ENCODE measurements at regions of chr15 and their contacts with region 1.

Region 1: DNA sequence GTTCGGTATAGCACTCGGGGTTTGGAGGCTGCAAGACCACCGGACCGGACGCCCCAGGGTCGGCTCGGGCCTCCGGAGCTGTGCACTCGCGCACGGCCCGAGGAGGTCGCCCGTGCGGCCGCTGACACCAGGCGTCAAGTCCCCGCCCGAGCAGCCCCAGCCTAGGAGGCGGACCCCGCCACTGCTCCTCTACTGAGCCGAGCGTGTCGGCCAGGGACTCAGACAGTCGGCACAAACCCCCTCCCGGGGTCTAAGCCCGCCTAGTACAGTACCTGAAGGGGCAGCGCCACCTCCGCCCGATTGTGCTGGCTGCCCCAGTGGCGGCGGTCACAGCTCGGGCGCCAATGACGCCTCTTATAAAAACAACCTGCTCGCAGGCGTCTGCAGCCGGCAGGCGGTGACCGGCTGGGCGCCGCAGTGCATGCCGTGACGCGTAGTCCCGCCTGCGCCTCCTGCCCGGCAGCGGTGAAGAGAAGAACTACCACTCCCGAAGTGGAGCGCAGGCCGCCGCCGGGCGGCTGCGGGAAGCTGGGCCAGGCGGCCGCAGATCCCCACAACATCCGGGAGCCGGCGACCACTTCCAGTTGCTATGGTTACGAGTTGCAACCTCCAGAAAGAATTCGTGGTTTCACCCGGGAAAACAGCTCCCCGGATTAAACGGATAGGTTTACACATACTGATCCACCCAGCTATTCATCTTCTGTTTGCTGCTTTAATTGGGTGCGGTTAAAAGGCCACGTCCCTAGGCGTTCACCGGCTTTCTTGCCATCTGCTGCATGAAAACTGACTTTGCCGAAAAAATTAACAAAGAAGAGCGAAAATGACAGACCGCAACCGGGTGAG is at the starts of genes CCPG1 and PIERCE2:
- DNase-seq: peak; percentile 72
- ATAC-seq: peak; percentile 92
- H3K4me3 ChIP-seq: peak within 1 kb of the TSS; percentile 78
- H3K27ac ChIP-seq: peak within 1 kb of the TSS; percentile 55
- H3K4me1 ChIP-seq: peaks cover 22% of the 10 kb centered on the region
- H3K27me3 ChIP-seq: no peaks in the 10 kb centered on the region
- CTCF ChIP-seq: peak; percentile 58 to 73 (median 64)
- EP300 ChIP-seq: peak in 1 of 2 experiments; percentile 60; a peak in 1 of 4 replicates
- POLR2A ChIP-seq: peak; percentile 86
- RAD21 ChIP-seq: no peak
- polyA plus RNA-seq, gene CCPG1: 6.6 to 7.5 TPM
- polyA plus RNA-seq, gene PIERCE2: 0.93 to 1.3 TPM

Region 2: DNA sequence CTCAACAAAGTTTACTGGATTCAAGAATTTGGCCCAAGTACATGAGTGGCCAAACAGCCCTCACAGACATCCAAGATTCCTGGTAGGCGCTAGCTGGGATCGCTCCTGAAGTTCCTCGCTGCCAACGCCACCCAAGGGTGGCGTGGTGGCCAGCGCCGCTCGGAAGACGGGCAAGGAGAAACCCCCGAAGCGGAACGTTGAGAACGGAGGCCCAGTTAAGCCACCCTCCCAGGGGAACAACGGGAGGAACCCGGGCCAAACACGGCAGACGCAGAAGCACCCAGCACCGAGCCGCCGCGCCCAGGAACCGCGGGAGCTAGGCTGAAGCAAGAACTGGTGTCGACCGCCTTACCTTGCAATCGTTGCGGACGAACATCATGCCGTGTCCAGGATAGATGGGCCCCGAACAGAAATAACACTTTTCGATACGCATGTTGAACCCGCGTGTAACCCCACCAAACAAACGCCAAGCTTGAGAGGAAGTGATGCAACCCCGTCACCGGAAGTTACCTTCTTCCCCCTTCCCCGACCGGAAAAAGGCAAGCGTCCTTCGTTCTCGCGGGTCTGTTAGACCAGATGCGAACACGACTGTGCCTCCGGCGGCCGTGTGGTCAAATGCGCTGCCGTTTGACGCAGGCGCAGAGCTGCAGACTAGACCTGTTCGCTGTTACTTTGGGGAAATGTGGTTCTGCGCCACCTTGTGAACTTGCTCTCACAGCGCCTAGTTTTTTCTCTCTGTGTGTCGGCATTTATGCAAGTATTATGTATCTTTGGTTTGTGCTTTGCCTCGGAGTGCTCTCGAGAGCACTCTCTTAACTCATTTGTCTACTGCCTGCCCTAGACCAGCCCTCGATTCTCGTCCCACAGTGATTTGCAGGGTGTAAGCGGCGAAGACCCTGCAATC is 211.5 kb before region 1 on chr15 and contains the start of gene RSL24D1:
- CTCF ChIA-PET with region 1: no interaction called
- POLR2A ChIA-PET with region 1: no interaction called
- RAD21 ChIA-PET with region 1: interaction called, 5 read pairs
- SMC1A ChIA-PET with region 1: interaction called, 3 read pairs
- in situ Hi-C with region 1: no loop called
- intact Hi-C with region 1: loop called (anchors 10 kb)
- DNase-seq: peak; percentile 97
- ATAC-seq: peak; percentile 97
- H3K4me3 ChIP-seq: peak within 1 kb of the TSS; percentile 99
- H3K27ac ChIP-seq: peak within 1 kb of the TSS; percentile 93
- H3K4me1 ChIP-seq: peaks cover 2% of the 10 kb centered on the region; the same call in 1 of the 2 replicates
- H3K27me3 ChIP-seq: no peaks in the 10 kb centered on the region
- CTCF ChIP-seq: peak; percentile 33 to 64 (median 44); a peak in 4 of 6 replicates
- EP300 ChIP-seq: 0 out of 4 replicates have a peak, but pooled peaks of 1 of the 2 experiments have one; percentile 34
- POLR2A ChIP-seq: peak; percentile 86
- RAD21 ChIP-seq: 0 out of 2 replicates have a peak, but pooled peaks have one; percentile 26
- polyA plus RNA-seq, gene RSL24D1: 198 to 249 TPM

Region 3: DNA sequence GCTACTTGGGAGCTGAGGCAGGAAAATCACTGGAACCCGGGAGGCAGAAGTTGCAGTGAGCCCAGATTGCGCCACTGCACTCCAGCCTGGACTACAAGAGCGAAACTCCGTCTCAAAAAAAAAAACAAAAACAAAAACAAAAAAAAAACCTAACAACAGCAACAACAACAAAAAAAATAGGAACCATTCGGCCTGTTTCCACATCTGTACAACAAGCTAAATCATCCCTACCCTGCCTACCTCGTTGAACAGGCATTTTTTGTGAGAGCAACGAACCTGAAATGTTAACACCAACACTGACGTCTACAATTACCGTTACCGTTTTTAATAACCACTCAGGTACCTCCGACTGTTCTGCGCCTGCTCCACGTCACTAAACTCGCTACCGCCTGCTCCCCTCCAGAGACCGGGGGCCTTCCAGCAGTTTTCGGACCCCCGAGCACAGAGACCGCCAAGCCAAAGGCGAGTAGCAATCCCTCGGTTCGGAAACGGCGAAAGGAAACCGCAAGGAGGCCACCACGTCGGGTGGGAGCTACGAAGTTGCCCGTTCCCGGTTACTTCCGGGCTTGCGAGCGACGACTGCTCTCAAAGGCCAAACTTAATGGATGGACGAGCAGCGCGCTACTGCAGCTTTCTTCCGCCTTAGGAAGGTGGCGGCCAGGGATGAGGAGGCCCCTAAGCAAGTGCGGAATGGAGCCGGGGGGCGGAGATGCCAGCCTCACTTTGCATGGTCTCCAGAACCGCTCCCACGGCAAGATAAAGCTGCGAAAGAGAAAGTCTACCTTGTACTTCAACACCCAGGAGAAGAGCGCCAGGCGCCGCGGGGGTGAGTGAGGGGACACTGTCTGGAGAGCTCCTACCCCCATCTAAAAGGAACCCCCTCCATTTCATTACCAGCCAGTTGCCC is 89.3 kb before region 1 on chr15 and contains the starts of genes PIGB and PIGBOS1:
- CTCF ChIA-PET with region 1: interaction called, 9 read pairs
- POLR2A ChIA-PET with region 1: interaction called, 12 read pairs
- RAD21 ChIA-PET with region 1: interaction called, 24 read pairs
- SMC1A ChIA-PET with region 1: interaction called, 13 read pairs
- in situ Hi-C with region 1: no loop called
- intact Hi-C with region 1: loop called (anchors 2 kb)
- DNase-seq: peak; percentile 76
- ATAC-seq: peak; percentile 92
- H3K4me3 ChIP-seq: peak within 1 kb of the TSS; percentile 80
- H3K27ac ChIP-seq: peak within 1 kb of the TSS; percentile 100
- H3K4me1 ChIP-seq: no peaks in the 10 kb centered on the region
- H3K27me3 ChIP-seq: no peaks in the 10 kb centered on the region
- CTCF ChIP-seq: no peak
- EP300 ChIP-seq: no peak
- POLR2A ChIP-seq: peak; percentile 93
- RAD21 ChIP-seq: no peak
- polyA plus RNA-seq, gene PIGB: 22.7 to 44.6 TPM
- polyA plus RNA-seq, gene PIGBOS1: 19.9 to 24.7 TPM

Region 4: DNA sequence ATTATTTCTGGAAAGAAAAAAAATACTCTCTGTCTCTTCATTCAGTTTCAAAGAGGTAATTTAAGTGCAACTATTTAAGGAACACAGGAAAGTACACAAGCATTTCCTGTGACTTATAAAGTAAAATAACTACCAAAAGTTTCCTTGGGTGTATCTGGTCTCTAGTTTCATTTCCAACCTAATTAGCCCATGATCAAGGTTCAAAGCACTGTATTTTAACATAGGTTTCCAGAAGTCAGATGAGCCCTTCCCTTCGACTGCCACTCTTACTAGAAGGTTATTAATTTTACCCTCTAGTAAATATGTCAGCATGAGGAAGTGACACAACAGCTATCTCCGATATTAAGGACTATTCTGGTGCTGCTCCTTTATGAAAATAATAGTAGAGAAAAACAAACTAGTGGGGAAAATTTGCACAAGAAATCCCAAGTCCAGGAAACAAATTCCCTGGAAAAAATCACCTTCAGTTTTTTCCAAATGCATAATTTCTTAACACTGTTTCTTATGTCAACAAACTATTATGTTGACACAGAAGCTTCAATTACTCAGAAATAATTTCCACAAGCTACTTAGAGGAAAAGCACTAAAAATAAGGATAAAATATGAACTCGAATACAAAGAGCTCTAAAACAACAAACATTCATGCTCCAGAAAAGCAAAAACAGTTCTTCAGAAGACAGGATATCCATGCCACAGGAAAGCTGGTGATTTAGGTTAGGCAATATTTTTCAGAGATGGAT is 35.3 kb before region 1 on chr15:
- CTCF ChIA-PET with region 1: interaction called, 7 read pairs
- POLR2A ChIA-PET with region 1: no interaction called
- RAD21 ChIA-PET with region 1: no interaction called
- SMC1A ChIA-PET with region 1: interaction called, 20 read pairs
- in situ Hi-C with region 1: no loop called
- intact Hi-C with region 1: no loop called
- DNase-seq: peak; percentile 24
- ATAC-seq: peak; percentile 80
- H3K4me3 ChIP-seq: peak overlapping the region; percentile 10; the same call in 1 of the 2 replicates
- H3K27ac ChIP-seq: peak overlapping the region; percentile 50
- H3K4me1 ChIP-seq: peaks cover 7% of the 10 kb centered on the region
- H3K27me3 ChIP-seq: no peaks in the 10 kb centered on the region
- CTCF ChIP-seq: no peak
- EP300 ChIP-seq: no peak
- POLR2A ChIP-seq: no peak
- RAD21 ChIP-seq: no peak

Region 5: DNA sequence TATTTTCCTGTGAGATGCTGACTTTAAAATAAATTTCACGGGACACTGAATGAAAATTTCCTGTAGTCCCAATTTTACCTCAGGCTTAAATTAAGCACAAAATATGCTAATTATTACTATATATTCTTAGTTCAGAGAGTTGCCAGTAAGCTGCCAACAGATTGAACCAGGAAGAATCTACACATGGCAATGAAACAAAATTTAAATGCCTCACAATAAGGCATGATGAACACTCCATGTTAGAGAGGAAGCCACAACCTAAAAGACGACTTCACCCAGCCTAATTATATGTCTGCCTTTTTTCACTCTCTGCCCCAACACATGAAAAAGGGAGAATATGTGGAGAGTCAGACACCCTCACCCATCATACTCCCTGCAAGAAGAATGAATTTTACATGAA is 60.2 kb after region 1 on chr15:
- CTCF ChIA-PET with region 1: no interaction called
- POLR2A ChIA-PET with region 1: no interaction called
- RAD21 ChIA-PET with region 1: no interaction called
- SMC1A ChIA-PET with region 1: no interaction called
- in situ Hi-C with region 1: no loop called
- intact Hi-C with region 1: no loop called
- DNase-seq: no peak
- ATAC-seq: no peak
- H3K4me3 ChIP-seq: no peak overlapping the region
- H3K27ac ChIP-seq: no peak overlapping the region
- H3K4me1 ChIP-seq: no peaks in the 10 kb centered on the region
- H3K27me3 ChIP-seq: no peaks in the 10 kb centered on the region
- CTCF ChIP-seq: no peak
- EP300 ChIP-seq: no peak
- POLR2A ChIP-seq: no peak
- RAD21 ChIP-seq: no peak

Region 6: GRCh38 chr15:55518641-55519040 is 110.5 kb after region 1 on chr15:
- CTCF ChIA-PET with region 1: no interaction called
- POLR2A ChIA-PET with region 1: no interaction called
- RAD21 ChIA-PET with region 1: no interaction called
- SMC1A ChIA-PET with region 1: no interaction called
- in situ Hi-C with region 1: no loop called
- intact Hi-C with region 1: no loop called
- DNase-seq: no peak
- ATAC-seq: no peak
- H3K4me3 ChIP-seq: no peak overlapping the region
- H3K27ac ChIP-seq: no peak overlapping the region
- H3K4me1 ChIP-seq: no peaks in the 10 kb centered on the region
- H3K27me3 ChIP-seq: no peaks in the 10 kb centered on the region; a peak in 1 of 4 replicates
- CTCF ChIP-seq: 0 out of 6 replicates have a peak, but pooled peaks of 1 of the 3 experiments have one; percentile 12
- EP300 ChIP-seq: no peak
- POLR2A ChIP-seq: no peak
- RAD21 ChIP-seq: no peak

Measured in GM12878 (cell line).